Heart left ventricle (tissue), 16 donors: ENCODE measurements at regions of chr3 and their contacts with region 1.

Region 1: GRCh38 chr3:40191850-40192448 is 117.6 kb upstream of the EIF1B start:
- DNase-seq: peak in 4 of 5 donors; percentile 44 to 53 (median 46)
- ATAC-seq: peak in 3 of 4 donors; percentile 47 to 62 (median 56)
- H3K4me3 ChIP-seq: no peak overlapping the region
- H3K27ac ChIP-seq: no peak overlapping the region
- H3K4me1 ChIP-seq: peaks cover 0 to 25% (median 4%) of the 10 kb centered on the region in 12 donors
- H3K27me3 ChIP-seq: no peaks in the 10 kb centered on the region
- CTCF ChIP-seq: peak; percentile 93 to 98 (median 97)
- POLR2A ChIP-seq: no peak

Region 2: GRCh38 chr3:39812537-39812936 is 379.4 kb before region 1 on chr3:
- intact Hi-C with region 1: loop called in 1 of 10 experiments (anchors 10 kb)
- DNase-seq: no peak
- ATAC-seq: no peak
- H3K4me3 ChIP-seq: no peak overlapping the region
- H3K27ac ChIP-seq: no peak overlapping the region
- H3K4me1 ChIP-seq: peaks cover 0 to 21% (median 12%) of the 10 kb centered on the region in 12 donors
- H3K27me3 ChIP-seq: peaks cover 2 to 51% (median 28%) of the 10 kb centered on the region in 9 donors
- CTCF ChIP-seq: peak in 8 of 12 donors; percentile 7 to 54 (median 34)
- POLR2A ChIP-seq: no peak

Region 3: DNA sequence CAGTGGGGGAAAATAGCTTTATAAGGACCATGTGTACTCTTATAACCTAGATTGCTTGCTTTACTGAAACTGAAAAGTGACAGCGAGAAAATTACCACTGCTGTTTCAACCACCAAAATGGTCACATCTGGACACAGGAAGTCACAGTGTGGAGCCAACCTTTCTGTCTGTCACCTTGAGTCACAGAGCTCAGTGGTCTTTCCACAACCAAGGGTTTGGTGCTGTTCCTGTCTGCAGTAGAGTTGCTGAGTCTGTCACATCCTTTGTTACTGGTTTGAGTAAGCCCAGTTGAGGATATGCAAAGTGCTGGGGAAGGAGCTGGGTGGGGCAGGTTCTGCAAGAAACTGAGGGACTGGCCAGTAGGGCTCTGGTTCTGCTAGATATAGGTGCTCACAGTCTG is 21.6 kb before region 1 on chr3:
- intact Hi-C with region 1: no loop called
- DNase-seq: no peak
- ATAC-seq: no peak
- H3K4me3 ChIP-seq: no peak overlapping the region
- H3K27ac ChIP-seq: no peak overlapping the region
- H3K4me1 ChIP-seq: peaks cover 0 to 14% (median 0%) of the 10 kb centered on the region in 12 donors
- H3K27me3 ChIP-seq: no peaks in the 10 kb centered on the region
- CTCF ChIP-seq: no peak
- POLR2A ChIP-seq: no peak